Activated CD4-positive, alpha-beta memory T cell treated with anti-CD3 and anti-CD28 coated beads for 36 hours (primary cell): ENCODE measurements at regions of chr3 and their contacts with region 1.

Region 1: GRCh38 chr3:101170062-101170771 is 150.2 kb downstream of the IMPG2 start:
- DNase-seq: no peak
- H3K4me3 Mint-ChIP-seq: no peak overlapping the region
- H3K27ac Mint-ChIP-seq: no peak overlapping the region
- H3K4me1 Mint-ChIP-seq: peaks cover 15% of the 10 kb centered on the region
- H3K27me3 Mint-ChIP-seq: peaks cover 4% of the 10 kb centered on the region

Region 2: GRCh38 chr3:101243285-101244211 is 73.3 kb after region 1 on chr3:
- CTCF ChIA-PET with region 1: no interaction called
- POLR2A ChIA-PET with region 1: no interaction called
- intact Hi-C with region 1: loop called (anchors 5 kb)
- DNase-seq: peak; percentile 40
- H3K4me3 Mint-ChIP-seq: no peak overlapping the region
- H3K27ac Mint-ChIP-seq: no peak overlapping the region
- H3K4me1 Mint-ChIP-seq: peaks cover 4% of the 10 kb centered on the region
- H3K27me3 Mint-ChIP-seq: no peaks in the 10 kb centered on the region